ENCODE measurements at regions of chr6 and their contacts with region 1.

Region 1: GRCh38 chr6:27838058-27838944 is 73.9 kb downstream of the OR2B2 start:
- DNase-seq: peak; percentile 52 to 60
- ATAC-seq: peak; percentile 99
- H3K4me3 ChIP-seq: peak overlapping the region; percentile 75 to 91 (median 76)
- H3K27ac ChIP-seq: peak overlapping the region; percentile 89 to 94 (median 93)
- H3K4me1 ChIP-seq: peaks cover 21 to 33% of the 10 kb centered on the region in 2 donors
- H3K27me3 ChIP-seq: no peaks in the 10 kb centered on the region
- CTCF ChIP-seq: peak in 2 of 5 experiments; percentile 7 to 14
- POLR2A ChIP-seq: peak; percentile 81 to 94

Region 2: DNA sequence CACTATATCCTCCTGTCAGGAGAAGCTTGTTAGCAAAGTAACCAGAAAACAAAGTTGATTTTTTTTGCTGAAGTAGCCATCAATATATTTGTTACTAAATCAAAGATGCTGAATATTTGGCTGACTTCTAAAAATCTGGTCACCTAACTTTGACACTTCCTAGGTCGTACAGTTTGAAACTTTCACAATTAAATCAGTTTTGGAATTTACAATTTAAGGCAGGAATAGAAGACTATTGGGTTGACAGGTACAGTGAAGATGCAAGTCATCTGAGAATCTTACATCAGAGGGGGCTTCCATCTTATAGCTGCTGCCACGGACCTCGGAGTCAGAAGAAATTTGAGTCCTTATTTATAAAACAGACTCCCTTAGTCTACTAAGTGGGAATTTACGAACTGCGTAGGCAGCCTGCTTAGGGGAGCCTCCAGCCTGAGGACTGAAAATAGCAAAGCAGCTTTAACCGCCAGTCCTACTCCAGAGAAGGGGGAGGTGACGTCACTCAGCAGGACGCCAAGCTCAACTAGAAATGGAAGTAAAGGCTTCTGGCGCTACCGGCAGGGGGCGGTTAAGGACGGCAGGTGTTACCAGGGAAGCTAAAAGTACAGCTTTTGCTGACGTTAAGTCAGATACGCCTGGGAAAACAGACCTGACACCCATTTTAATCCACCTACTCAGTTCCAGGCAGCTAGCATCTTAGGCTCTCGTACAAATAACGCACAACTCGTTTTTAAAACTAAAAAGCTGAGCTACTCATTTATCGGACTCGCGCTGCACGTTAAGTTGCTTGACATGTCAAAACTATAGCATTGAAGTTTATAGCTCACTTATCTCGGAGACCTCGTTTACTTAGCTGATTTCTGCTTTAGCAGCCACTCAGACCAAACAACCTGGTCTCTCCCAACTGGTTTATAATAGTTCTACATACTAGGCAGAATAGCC is 1812.1 kb before region 1 on chr6:
- in situ Hi-C with region 1: loop called in 1 of 4 experiments (anchors 25 kb)
- intact Hi-C with region 1: no loop called
- DNase-seq: peak; percentile 86 to 87
- ATAC-seq: peak; percentile 60 to 72
- H3K4me3 ChIP-seq: peak overlapping the region; percentile 46 to 65 (median 62)
- H3K27ac ChIP-seq: peak overlapping the region; percentile 80 to 88 (median 83)
- H3K4me1 ChIP-seq: peaks cover 0 to 15% of the 10 kb centered on the region in 2 donors
- H3K27me3 ChIP-seq: peaks cover 7 to 67% (median 13%) of the 10 kb centered on the region in 3 donors
- CTCF ChIP-seq: peak; percentile 50 to 75 (median 73)
- POLR2A ChIP-seq: peak; percentile 7

Region 3: DNA sequence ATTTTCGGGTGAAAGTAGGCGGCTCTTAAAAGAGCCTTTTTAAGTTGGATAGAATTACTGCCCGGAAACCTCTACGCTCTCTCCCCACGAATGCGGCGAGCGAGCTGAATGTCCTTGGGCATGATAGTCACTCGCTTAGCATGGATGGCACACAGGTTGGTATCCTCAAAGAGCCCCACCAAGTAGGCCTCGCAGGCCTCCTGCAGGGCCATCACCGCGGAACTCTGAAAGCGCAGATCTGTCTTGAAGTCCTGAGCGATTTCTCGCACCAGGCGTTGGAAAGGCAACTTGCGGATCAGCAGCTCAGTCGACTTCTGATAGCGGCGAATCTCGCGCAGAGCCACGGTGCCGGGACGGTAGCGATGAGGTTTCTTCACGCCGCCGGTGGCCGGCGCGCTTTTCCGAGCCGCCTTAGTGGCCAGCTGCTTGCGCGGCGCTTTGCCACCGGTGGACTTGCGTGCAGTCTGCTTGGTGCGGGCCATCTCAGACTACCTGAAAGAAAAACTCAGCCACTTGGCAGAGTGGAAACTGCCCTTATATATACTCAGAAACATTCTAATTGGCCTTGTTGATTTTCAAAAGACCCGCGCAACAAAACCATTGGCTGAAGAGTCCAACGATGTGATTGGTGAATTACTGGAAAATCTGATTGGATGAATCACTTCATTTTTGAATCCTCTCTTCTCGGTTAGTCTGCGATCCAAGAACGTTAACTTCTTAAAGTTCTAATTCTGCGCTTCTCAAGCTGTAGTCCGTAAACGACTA is 1567.2 kb before region 1 on chr6:
- in situ Hi-C with region 1: no loop called
- intact Hi-C with region 1: loop called (anchors 10 kb)
- DNase-seq: peak in 1 of 2 donors; percentile 45
- ATAC-seq: peak; percentile 55 to 66
- H3K4me3 ChIP-seq: peak overlapping the region; percentile 2 to 54 (median 40)
- H3K27ac ChIP-seq: peak overlapping the region in 3 of 4 donors; percentile 44 to 48 (median 45)
- H3K4me1 ChIP-seq: peaks cover 5 to 6% of the 10 kb centered on the region in 2 donors
- H3K27me3 ChIP-seq: peaks cover 66 to 71% (median 68%) of the 10 kb centered on the region in 3 donors
- CTCF ChIP-seq: no peak
- POLR2A ChIP-seq: no peak

Region 4: DNA sequence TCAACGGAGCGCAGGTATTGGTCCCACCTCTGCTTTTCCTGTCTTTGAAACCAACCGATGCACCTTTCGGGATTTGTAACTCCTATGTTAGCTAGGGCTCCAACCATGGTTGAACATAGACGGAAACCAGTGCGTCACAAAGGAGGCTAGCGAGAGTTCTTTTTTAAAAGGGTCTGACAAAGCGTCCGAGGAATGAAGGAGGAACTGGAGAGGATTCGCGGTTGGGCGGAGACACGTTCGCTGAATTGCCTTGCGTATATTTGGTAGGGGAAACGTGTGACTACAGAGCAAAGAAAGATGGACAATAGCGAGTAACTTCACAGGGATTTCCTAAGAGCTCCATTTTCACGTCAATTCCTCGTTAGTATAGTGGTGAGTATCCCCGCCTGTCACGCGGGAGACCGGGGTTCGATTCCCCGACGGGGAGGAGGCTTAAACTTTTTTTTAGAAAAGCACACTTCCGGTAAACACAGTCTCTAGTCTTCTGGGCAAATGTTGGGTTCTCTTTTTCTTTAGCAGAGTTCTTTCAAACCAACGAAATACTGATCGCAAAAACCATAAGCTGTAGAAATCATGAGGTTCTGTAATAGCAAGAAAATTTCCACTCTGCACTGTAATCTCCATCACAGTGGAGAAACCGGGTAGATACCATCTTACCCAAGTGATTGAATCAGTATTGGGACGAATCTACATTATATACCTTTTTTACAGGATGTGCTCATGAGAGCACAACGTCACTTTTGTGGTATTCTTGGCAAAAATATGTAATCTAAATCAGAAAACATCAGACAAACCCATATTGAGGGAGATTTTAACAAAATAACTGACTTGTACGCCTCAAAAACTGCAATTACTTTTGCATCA is 358.8 kb before region 1 on chr6:
- in situ Hi-C with region 1: no loop called
- intact Hi-C with region 1: loop called (anchors 5 kb)
- DNase-seq: peak; percentile 49 to 53
- ATAC-seq: peak; percentile 87 to 89
- H3K4me3 ChIP-seq: peak overlapping the region; percentile 71 to 87 (median 80)
- H3K27ac ChIP-seq: peak overlapping the region; percentile 89 to 94 (median 90)
- H3K4me1 ChIP-seq: peaks cover 0 to 11% of the 10 kb centered on the region in 2 donors
- H3K27me3 ChIP-seq: no peaks in the 10 kb centered on the region
- CTCF ChIP-seq: no peak
- POLR2A ChIP-seq: peak; percentile 23 to 36

Region 5: GRCh38 chr6:27809939-27810767 is 28.1 kb before region 1 on chr6:
- in situ Hi-C with region 1: no loop called
- intact Hi-C with region 1: loop called (anchors 2 kb)
- DNase-seq: peak; percentile 26 to 33
- ATAC-seq: peak; percentile 74 to 78
- H3K4me3 ChIP-seq: peak overlapping the region; percentile 51 to 67 (median 60)
- H3K27ac ChIP-seq: peak overlapping the region in 3 of 4 donors; percentile 41 to 68 (median 55)
- H3K4me1 ChIP-seq: peaks cover 3 to 17% of the 10 kb centered on the region in 2 donors
- H3K27me3 ChIP-seq: peaks cover 75 to 96% (median 83%) of the 10 kb centered on the region in 3 donors
- CTCF ChIP-seq: no peak
- POLR2A ChIP-seq: peak; percentile 58 to 76

Region 6: GRCh38 chr6:27864906-27865849 is 26.9 kb after region 1 on chr6:
- in situ Hi-C with region 1: no loop called
- intact Hi-C with region 1: loop called (anchors 2 kb)
- DNase-seq: peak in 1 of 2 donors; percentile 29
- ATAC-seq: peak; percentile 94 to 95
- H3K4me3 ChIP-seq: peak overlapping the region; percentile 60 to 66 (median 64)
- H3K27ac ChIP-seq: peak overlapping the region in 1 of 4 donors; percentile 34
- H3K4me1 ChIP-seq: peaks cover 25 to 31% of the 10 kb centered on the region in 2 donors
- H3K27me3 ChIP-seq: peaks cover 51 to 71% (median 62%) of the 10 kb centered on the region in 3 donors
- CTCF ChIP-seq: no peak
- POLR2A ChIP-seq: peak; percentile 28 to 49

Region 7: GRCh38 chr6:27902335-27903314 is 64.3 kb after region 1 on chr6:
- in situ Hi-C with region 1: no loop called
- intact Hi-C with region 1: loop called (anchors 2 kb)
- DNase-seq: peak; percentile 53 to 60
- ATAC-seq: peak; percentile 94
- H3K4me3 ChIP-seq: peak overlapping the region; percentile 51 to 60 (median 56)
- H3K27ac ChIP-seq: peak overlapping the region; percentile 74 to 82 (median 79)
- H3K4me1 ChIP-seq: no peaks in the 10 kb centered on the region
- H3K27me3 ChIP-seq: no peaks in the 10 kb centered on the region
- CTCF ChIP-seq: no peak
- POLR2A ChIP-seq: no peak